ENCODE measurements at regions of chr16 and their contacts with region 1.

Region 1: DNA sequence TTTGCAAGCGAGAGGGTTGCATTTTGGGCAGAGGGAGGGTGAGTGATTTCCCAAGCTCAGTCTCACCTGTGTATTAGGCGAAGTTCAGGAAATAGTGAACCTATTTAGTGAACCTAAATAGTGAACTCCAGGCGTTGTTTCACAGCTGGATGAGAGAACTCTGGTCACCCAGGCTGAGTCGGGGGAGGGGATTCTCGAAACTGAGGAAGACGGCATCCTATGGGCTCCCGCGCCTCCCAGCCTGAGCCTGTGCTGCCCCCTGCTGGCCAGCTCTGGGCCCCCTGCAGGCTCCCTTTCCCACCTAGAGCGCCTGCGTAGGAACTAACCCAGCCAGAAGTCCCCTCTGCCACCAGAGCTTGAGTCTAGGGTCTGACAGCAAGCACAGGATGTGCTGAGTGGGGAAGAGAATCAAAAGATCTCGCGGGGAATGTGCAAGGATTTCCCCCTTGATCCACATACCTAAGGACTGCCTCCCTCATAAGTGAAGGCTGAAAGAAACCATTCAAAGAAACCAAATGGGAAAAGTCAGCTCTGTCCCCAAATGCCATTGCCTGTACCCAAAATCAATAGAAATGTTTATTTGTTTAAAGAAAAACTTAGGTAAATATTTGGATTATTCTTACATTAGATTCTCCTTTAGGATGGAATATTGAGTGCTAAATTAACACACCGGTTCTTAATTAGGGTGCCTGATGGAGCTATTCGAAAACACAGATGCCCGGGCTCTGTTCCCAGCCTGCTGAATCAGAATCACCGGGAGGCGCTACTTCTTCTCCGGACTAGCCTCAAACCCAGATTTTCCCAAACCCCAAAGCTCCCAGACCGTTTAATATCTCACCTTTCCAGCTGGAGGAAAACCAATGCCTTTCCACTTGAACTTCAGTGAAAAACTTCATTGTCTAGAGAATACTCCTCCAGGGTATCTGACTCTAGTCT is 14.8 kb upstream of the MARVELD3 start:
- DNase-seq: peak; percentile 83
- ATAC-seq: peak; percentile 96
- H3K4me3 Mint-ChIP-seq: no peak overlapping the region
- H3K27ac Mint-ChIP-seq: no peak overlapping the region
- H3K4me1 Mint-ChIP-seq: peaks cover 8% of the 10 kb centered on the region
- H3K27me3 Mint-ChIP-seq: peaks cover 34% of the 10 kb centered on the region

Region 2: DNA sequence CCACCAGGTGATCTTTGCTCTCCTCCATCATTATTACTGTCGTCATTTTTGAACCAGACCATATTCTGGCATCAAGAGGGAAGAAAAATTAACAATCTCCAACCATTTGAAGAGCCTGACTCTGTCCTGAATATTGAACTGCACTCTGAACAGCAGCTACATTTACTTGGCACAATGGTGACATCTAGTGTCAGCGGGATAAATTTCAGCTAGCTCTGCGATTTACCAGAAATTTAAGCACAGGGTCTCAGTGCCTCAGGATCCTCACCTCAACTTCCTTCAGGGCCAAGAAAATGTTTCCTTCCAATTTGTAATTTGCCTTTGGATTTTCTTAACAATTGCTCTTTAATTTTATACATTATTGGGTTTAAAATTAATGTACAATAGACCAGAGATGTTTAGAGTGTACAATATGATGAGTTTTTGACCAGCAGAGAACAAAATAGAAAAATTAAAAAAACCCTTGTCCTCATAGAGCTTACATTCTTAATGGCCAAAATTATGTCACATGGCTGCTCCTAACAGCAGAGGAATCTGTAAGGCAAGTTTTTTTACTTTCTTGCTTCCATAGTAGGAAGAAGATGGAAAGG is 111.3 kb before region 1 on chr16:
- CTCF ChIA-PET with region 1: interaction called, 13 read pairs
- POLR2A ChIA-PET with region 1: no interaction called
- DNase-seq: peak; percentile 68
- ATAC-seq: peak; percentile 60
- H3K4me3 Mint-ChIP-seq: no peak overlapping the region
- H3K27ac Mint-ChIP-seq: no peak overlapping the region
- H3K4me1 Mint-ChIP-seq: no peaks in the 10 kb centered on the region
- H3K27me3 Mint-ChIP-seq: peaks cover under 1% of the 10 kb centered on the region

Region 3: GRCh38 chr16:71552698-71553451 is 58.3 kb before region 1 on chr16:
- CTCF ChIA-PET with region 1: interaction called, 19 read pairs
- POLR2A ChIA-PET with region 1: no interaction called
- DNase-seq: no peak
- ATAC-seq: no peak
- H3K4me3 Mint-ChIP-seq: no peak overlapping the region
- H3K27ac Mint-ChIP-seq: no peak overlapping the region
- H3K4me1 Mint-ChIP-seq: no peaks in the 10 kb centered on the region
- H3K27me3 Mint-ChIP-seq: peaks cover 22% of the 10 kb centered on the region

Region 4: GRCh38 chr16:71593048-71593999 is 17.9 kb before region 1 on chr16:
- CTCF ChIA-PET with region 1: interaction called, 13 read pairs
- POLR2A ChIA-PET with region 1: no interaction called
- DNase-seq: no peak
- ATAC-seq: no peak
- H3K4me3 Mint-ChIP-seq: no peak overlapping the region
- H3K27ac Mint-ChIP-seq: no peak overlapping the region
- H3K4me1 Mint-ChIP-seq: no peaks in the 10 kb centered on the region
- H3K27me3 Mint-ChIP-seq: peaks cover 28% of the 10 kb centered on the region

Region 5: DNA sequence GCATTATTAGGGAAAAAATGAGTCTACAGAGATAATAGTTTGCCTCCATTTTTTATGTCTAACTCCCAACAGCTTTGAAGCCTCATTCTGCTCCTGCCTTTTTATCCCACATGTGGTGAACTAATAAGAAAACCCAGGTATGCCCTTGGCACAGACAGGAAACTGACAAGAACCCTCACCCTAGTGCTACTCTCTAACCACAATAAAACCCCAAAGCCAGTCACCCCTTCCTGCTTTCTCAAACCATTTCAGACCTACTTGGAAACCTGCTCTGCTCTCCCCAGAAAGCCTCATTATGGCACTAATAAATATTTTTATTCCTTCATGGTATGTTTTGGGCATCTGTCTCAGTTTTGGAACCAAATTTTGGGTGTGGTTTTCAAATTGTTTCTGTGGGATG is 10.9 kb after region 1 on chr16:
- CTCF ChIA-PET with region 1: interaction called, 21 read pairs
- POLR2A ChIA-PET with region 1: no interaction called
- DNase-seq: peak; percentile 62
- ATAC-seq: peak; percentile 68
- H3K4me3 Mint-ChIP-seq: peak overlapping the region; percentile 37
- H3K27ac Mint-ChIP-seq: no peak overlapping the region
- H3K4me1 Mint-ChIP-seq: no peaks in the 10 kb centered on the region
- H3K27me3 Mint-ChIP-seq: peaks cover 29% of the 10 kb centered on the region

Region 6: GRCh38 chr16:71645453-71645852 is 34.2 kb after region 1 on chr16:
- CTCF ChIA-PET with region 1: interaction called, 13 read pairs
- POLR2A ChIA-PET with region 1: no interaction called
- DNase-seq: peak; percentile 29
- ATAC-seq: peak; percentile 71
- H3K4me3 Mint-ChIP-seq: no peak overlapping the region
- H3K27ac Mint-ChIP-seq: no peak overlapping the region
- H3K4me1 Mint-ChIP-seq: no peaks in the 10 kb centered on the region
- H3K27me3 Mint-ChIP-seq: no peaks in the 10 kb centered on the region

Region 7: DNA sequence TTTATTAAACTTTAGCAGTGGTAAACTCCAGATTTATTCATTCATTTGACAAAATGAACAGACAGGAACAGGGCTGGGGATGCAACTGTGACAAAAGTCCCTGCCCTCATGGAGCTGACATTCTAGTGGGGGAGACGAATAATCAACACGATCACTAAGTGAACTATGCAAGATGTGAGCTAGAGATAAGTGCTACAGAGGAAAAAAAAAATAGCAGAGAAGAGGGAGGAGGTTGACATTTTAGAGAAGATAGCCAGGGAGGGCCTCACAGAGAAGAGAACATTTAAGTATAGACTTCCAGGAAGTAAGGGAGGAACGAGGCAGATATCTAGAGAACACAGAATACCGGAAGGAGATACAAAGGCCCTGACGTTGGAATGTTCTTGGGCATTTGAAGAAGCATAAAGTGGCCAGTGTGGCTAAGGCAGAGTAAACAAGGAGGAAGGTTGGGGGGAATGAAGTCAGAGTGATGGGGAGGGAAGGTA is 215.4 kb after region 1 on chr16:
- CTCF ChIA-PET with region 1: no interaction called
- POLR2A ChIA-PET with region 1: no interaction called
- DNase-seq: no peak
- ATAC-seq: no peak
- H3K4me3 Mint-ChIP-seq: no peak overlapping the region
- H3K27ac Mint-ChIP-seq: no peak overlapping the region
- H3K4me1 Mint-ChIP-seq: no peaks in the 10 kb centered on the region
- H3K27me3 Mint-ChIP-seq: no peaks in the 10 kb centered on the region